ENCODE measurements at regions of chr15 and their contacts with region 1.

Region 1: DNA sequence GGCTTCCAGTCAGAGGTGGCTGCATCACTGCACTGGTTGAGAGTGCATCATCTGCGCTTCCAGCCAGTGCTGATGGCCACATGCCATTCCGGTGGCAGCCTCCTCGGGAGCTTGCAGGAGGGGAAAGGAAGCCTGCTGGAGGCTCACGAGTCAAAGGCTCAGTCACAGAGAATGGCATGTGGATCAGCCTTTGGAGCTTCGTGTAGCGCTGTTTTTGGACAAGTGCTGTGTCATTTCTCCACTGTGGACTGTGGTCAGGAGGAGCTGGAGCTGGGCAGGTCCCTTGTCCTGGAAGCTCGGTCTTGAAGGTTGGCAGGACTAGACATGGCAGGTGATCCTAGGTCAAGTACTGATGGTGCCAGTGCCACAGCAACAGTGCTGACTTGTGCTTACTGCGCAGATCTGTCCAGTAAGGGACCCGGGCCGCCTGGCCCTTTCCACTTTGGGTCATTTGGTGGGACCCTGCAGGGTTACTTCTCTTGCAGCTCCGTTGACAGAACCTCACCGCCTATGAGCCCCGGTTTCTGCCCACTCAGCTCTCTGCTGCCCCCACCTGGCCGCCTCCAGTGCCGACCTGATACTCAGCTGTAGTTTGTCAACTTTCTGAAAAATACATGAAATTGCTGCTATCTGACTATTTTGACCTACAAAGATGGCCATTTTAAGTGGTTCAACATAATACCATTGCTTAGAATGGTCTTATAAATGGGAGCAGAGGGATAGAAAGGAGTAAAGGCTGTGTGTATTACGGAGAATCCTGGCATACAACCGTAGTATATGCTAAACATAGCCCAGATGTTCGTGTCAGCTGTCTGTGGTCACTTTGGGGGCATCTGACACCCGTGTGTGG is 27.6 kb upstream of the TRPM1 start:
- DNase-seq: peak; percentile 29
- H3K4me3 ChIP-seq: no peak overlapping the region
- H3K27ac ChIP-seq: no peak overlapping the region
- H3K4me1 ChIP-seq: no peaks in the 10 kb centered on the region
- H3K27me3 ChIP-seq: no peaks in the 10 kb centered on the region
- CTCF ChIP-seq: peak; percentile 91 to 96

Region 2: DNA sequence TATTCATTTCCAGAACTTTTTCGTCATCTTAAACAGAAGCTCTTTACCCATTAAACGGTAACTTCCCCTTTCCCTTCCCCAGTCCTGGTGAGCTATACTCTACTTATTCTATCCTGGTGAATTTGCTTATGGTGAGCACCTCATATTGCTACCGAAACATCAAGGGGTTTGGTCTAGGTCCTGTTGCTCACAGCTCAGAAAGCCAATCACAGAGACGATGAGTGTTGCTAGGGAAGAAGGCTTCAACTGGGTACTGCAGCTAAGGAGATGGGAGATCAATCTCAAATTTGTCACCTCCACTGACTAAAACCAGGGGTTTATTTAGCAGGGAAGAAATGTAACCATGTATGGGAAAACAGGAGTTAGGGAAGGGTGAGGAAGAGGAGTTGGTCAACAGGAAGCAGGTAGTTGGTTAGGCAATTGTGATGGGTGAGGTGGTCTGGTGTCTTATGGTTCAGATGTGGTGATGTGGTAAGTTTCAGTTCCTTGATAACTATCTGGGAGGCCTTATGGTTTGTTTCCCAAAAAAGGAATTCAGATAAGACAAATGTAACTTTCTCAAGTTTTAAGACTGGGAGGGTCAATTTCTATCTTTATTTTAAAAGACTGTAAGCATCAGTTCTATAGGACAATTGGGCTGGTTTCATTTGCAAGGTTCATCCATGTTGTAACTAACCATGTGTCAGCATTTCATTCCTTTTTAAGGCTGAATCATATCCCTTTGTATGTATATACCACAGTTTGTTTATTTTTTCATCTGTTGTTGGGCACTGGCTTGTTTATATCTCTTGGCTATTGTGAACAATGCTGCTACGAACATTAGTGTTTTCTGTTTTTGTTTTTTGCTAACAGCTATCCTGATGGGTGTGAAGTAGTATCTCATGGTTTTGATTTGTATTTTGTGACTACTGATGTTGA is 478.9 kb before region 1 on chr15:
- CTCF ChIA-PET with region 1: no interaction called
- dilution Hi-C with region 1: no loop called
- in situ Hi-C with region 1: loop called (anchors 25 kb)
- intact Hi-C with region 1: no loop called
- DNase-seq: no peak
- H3K4me3 ChIP-seq: no peak overlapping the region
- H3K27ac ChIP-seq: no peak overlapping the region
- H3K4me1 ChIP-seq: no peaks in the 10 kb centered on the region
- H3K27me3 ChIP-seq: no peaks in the 10 kb centered on the region
- CTCF ChIP-seq: no peak

Region 3: GRCh38 chr15:30791239-30792175 is 337.6 kb before region 1 on chr15:
- CTCF ChIA-PET with region 1: interaction called, 7 read pairs
- dilution Hi-C with region 1: loop called (anchors 25 kb)
- in situ Hi-C with region 1: no loop called
- intact Hi-C with region 1: loop called (anchors 10 kb)
- DNase-seq: no peak
- H3K4me3 ChIP-seq: no peak overlapping the region
- H3K27ac ChIP-seq: no peak overlapping the region
- H3K4me1 ChIP-seq: no peaks in the 10 kb centered on the region
- H3K27me3 ChIP-seq: no peaks in the 10 kb centered on the region
- CTCF ChIP-seq: no peak

Region 4: GRCh38 chr15:30885814-30886213 is 243.3 kb before region 1 on chr15:
- CTCF ChIA-PET with region 1: no interaction called
- dilution Hi-C with region 1: loop called (anchors 25 kb)
- in situ Hi-C with region 1: no loop called
- intact Hi-C with region 1: no loop called
- DNase-seq: no peak
- H3K4me3 ChIP-seq: no peak overlapping the region
- H3K27ac ChIP-seq: no peak overlapping the region
- H3K4me1 ChIP-seq: no peaks in the 10 kb centered on the region
- H3K27me3 ChIP-seq: no peaks in the 10 kb centered on the region
- CTCF ChIP-seq: no peak

Region 5: DNA sequence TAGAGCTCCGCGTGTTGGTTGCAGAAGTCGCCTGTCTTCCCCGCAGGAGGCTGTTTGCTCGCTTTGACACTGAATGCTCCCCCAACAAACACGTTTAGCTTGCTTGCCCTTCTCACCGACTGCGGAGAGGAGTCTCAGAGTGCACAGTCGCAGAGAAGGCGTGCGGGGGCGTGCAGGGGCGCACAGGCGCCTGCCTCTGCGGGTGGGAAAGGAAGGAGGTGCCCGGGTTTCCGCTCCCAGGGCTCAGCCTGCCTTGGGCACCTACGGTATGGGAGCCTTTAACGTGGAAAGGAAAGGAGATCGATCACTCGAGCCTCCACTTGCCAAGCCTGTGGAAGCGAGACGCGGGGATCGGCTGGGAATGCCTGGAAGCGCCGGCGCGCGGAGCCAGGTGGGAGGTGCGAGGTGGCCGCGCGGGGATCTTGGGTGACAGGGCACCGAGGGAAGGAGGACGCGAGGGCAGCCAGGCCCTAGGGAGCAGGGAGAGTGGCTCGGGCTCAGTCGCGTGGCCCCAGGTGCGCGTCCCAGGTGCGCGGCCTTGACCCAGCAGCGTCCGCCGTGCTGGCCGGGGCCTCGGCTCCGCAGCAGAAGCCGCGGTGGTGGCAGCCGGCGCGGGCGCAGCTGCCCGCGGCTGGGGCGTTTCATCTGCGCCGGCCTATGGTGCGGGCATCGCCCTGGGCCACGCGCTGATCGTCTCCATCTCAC is 225.5 kb before region 1 on chr15 and contains the start of gene FAN1:
- CTCF ChIA-PET with region 1: no interaction called
- dilution Hi-C with region 1: loop called (anchors 25 kb)
- in situ Hi-C with region 1: loop called in 1 of 2 experiments (anchors 25 kb)
- intact Hi-C with region 1: no loop called
- DNase-seq: peak; percentile 85
- H3K4me3 ChIP-seq: peak within 1 kb of the TSS; percentile 90 to 94 (median 92)
- H3K27ac ChIP-seq: peak within 1 kb of the TSS; percentile 34
- H3K4me1 ChIP-seq: peaks cover 7% of the 10 kb centered on the region
- H3K27me3 ChIP-seq: no peaks in the 10 kb centered on the region
- CTCF ChIP-seq: no peak
- total RNA-seq, gene FAN1: 21.5 to 23.8 TPM

Region 6: DNA sequence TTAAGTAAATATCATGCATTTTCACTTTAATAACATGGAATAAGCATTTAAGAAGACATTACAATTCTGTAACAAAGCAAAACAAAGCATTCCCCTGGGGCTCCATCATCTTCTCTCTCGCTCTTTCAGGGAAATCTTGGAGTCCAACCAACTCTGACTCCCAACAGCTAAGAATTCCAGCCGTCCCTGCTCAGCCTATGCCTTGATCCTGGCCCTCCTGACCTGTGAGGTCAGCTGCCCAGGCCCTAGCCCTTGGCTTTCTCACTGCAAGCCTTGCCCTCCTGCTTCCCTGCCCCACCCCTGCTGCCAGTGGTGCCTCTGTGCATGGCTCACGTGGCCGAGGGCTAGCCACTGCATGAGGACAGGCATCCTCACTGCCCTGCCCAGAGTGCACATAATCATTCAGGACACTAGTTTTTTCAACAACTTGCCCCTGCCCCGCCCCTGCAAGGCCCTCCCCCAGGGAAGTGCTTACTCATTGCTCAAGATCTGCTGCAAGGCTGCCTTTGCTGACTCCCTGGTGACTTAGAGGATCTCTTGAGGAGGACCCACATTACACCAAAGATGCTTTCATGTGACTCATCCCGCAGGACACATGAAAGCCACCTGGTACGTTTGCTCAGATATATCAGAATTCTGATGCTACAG is 175.3 kb before region 1 on chr15:
- CTCF ChIA-PET with region 1: no interaction called
- dilution Hi-C with region 1: no loop called
- in situ Hi-C with region 1: no loop called
- intact Hi-C with region 1: loop called (anchors 1 kb)
- DNase-seq: peak; percentile 87
- H3K4me3 ChIP-seq: no peak overlapping the region
- H3K27ac ChIP-seq: peak overlapping the region; percentile 3
- H3K4me1 ChIP-seq: peaks cover 8% of the 10 kb centered on the region
- H3K27me3 ChIP-seq: no peaks in the 10 kb centered on the region
- CTCF ChIP-seq: no peak

Region 7: DNA sequence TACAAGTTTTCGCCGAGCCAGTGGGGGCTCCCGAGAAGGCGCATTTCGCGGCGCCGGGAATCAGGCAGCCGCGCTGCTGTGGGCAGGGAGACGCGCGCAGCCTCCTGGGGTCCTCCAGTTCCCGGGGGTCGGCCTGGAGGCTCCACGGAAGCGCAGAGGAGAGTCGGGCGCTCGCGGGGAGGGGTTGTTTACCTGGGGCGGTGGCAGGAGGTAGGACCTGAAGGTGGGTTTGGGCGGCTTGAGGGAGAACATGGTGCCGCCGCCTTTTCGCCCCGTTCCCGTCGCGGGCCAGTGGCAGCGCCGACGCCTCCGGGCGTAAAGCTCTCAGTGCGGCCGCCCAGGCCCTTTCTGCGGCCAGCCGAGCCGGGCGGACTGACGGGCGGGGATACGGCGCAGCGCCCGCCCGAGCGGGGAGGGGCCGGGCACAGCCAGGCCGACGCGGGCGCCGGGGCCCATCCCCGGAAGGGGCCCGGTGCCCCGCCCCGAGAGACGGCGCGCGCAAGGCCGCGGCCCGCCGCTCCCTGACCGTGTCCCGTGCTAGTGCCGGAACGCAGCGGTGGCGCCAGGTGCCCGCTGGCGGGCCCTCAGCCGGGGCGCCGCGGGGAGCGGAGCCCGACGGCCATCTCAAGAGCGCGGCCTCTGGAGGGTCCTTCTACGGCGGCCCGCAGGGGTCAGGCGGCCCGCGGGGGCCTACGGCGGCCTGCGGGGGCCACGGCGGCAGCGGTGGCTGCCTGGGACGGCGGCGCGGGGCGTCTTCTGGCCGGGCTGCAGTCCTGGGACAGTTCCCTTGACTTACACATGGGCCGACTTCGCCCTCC is 137.7 kb before region 1 on chr15 and contains the start of gene MTMR10:
- CTCF ChIA-PET with region 1: no interaction called
- dilution Hi-C with region 1: no loop called
- in situ Hi-C with region 1: no loop called
- intact Hi-C with region 1: loop called (anchors 1 kb)
- DNase-seq: peak; percentile 76
- H3K4me3 ChIP-seq: peak within 1 kb of the TSS; percentile 86 to 90 (median 87)
- H3K27ac ChIP-seq: peak within 1 kb of the TSS; percentile 70
- H3K4me1 ChIP-seq: no peaks in the 10 kb centered on the region
- H3K27me3 ChIP-seq: no peaks in the 10 kb centered on the region
- CTCF ChIP-seq: peak in 1 of 2 donors; percentile 10
- total RNA-seq, gene MTMR10: 15.8 to 17.9 TPM

Region 8: GRCh38 chr15:31024330-31024729 is 104.8 kb before region 1 on chr15:
- CTCF ChIA-PET with region 1: no interaction called
- dilution Hi-C with region 1: no loop called
- in situ Hi-C with region 1: no loop called
- intact Hi-C with region 1: no loop called
- DNase-seq: peak; percentile 91
- H3K4me3 ChIP-seq: peak overlapping the region in 1 of 3 experiments; percentile 4
- H3K27ac ChIP-seq: peak overlapping the region; percentile 93
- H3K4me1 ChIP-seq: peaks cover 30% of the 10 kb centered on the region
- H3K27me3 ChIP-seq: no peaks in the 10 kb centered on the region
- CTCF ChIP-seq: no peak